RWPE1 (cell line): ENCODE measurements at regions of chr4 and their contacts with region 1.

Region 1: GRCh38 chr4:176134670-176135069 is 60.7 kb downstream of the SPATA4 start:
- DNase-seq: no peak
- H3K27ac ChIP-seq: no peak overlapping the region
- CTCF ChIP-seq: no peak

Region 2: DNA sequence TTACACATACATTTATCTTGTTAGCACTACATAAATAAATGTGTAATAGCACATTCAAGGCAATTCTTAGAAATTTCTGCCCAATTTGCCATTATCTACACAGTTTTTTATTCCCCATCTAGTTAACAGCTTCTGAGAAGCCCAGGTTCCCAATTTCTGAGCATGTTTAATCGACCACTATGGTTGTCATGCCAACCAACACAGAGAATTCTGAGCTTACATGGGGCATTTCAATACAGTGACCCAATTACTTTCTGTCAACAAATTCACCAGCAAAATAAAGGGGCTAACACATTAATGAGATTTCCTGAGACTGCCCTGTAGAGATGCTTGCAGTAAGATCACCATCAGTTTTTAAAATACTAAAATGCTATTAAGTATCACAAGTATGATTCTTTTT is 344.6 kb before region 1 on chr4:
- CTCF ChIA-PET with region 1: no interaction called
- POLR2A ChIA-PET with region 1: no interaction called
- DNase-seq: no peak
- H3K27ac ChIP-seq: no peak overlapping the region
- CTCF ChIP-seq: no peak

Region 3: GRCh38 chr4:176065435-176066291 is 69.0 kb before region 1 on chr4 and contains the start of gene WDR17:
- CTCF ChIA-PET with region 1: no interaction called
- POLR2A ChIA-PET with region 1: interaction called, 17 read pairs
- DNase-seq: peak; percentile 89
- H3K27ac ChIP-seq: no peak within 1 kb of the TSS
- CTCF ChIP-seq: no peak